ENCODE measurements at regions of chr10 and their contacts with region 1.

Region 1: GRCh38 chr10:112471878-112472487 is 25.0 kb downstream of the VTI1A start:
- DNase-seq: peak; percentile 66
- H3K4me3 ChIP-seq: no peak overlapping the region
- H3K27ac ChIP-seq: no peak overlapping the region
- H3K4me1 ChIP-seq: no peaks in the 10 kb centered on the region
- H3K27me3 ChIP-seq: no peaks in the 10 kb centered on the region
- CTCF ChIP-seq: peak; percentile 44 to 45
- POLR2A ChIP-seq: no peak

Region 2: DNA sequence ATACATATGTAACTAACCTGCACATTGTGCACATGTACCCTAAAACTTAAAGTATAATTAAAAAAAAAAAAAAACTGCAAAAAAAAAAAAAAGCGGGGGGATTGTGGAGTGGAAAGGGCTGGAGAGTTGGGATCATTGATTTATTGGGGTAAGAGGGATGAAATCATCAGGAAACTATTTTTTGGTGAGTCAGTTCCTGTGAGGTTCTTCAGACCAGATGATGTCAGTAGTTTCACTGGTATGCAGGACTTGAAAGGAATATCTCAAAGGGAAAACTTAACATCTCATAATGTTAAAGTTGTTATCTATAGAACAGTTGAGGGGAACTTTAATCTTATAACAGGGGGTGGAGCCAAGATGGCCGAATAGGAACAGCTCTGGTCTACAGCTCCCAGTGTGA is 221.4 kb before region 1 on chr10:
- CTCF ChIA-PET with region 1: no interaction called
- POLR2A ChIA-PET with region 1: no interaction called
- dilution Hi-C with region 1: no loop called
- intact Hi-C with region 1: no loop called
- DNase-seq: no peak
- H3K4me3 ChIP-seq: no peak overlapping the region
- H3K27ac ChIP-seq: no peak overlapping the region
- H3K4me1 ChIP-seq: no peaks in the 10 kb centered on the region
- H3K27me3 ChIP-seq: no peaks in the 10 kb centered on the region
- CTCF ChIP-seq: no peak
- POLR2A ChIP-seq: no peak

Region 3: DNA sequence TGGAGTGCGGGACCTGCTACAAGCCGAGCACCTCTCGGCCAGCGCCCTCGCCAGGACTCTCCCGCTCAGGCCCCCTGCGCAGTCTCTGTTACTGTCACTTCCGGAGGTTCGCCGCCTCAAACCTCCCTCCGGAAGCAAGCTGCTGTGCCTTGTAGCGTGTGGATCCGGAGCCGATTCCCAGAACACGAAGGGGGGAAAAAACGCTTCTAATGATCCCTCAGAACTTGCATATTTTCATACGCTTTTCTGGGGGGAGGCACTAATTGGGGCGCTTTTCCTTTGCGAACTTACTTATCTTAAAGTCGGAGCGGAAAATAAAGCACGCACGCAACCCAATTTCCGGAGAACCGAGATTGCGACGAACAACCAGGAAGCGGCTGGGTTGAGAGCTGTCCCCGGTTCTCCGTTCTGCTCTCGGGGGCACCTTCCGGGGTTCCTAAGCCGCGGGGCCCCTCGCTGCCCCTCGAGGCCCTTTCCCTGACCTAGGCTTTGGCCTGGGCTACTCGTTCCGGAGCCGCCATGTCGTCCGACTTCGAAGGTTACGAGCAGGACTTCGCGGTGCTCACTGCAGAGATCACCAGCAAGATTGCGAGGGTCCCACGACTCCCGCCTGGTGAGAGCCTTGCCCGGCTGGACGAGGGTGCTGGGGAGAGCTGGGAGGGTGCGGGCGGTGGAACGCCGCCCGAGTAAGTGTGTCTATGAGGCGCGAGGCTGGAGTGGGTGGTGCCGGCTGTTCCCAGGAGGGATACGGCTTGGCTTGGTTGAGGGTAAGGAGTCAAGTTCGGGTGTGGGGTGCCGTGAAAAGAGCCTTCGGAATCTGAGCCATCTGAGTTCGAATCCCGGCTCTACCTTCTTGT is 24.9 kb before region 1 on chr10 and contains the starts of genes VTI1A and ZDHHC6:
- CTCF ChIA-PET with region 1: interaction called, 19 read pairs
- POLR2A ChIA-PET with region 1: no interaction called
- dilution Hi-C with region 1: no loop called
- intact Hi-C with region 1: no loop called
- DNase-seq: peak; percentile 79
- H3K4me3 ChIP-seq: peak within 1 kb of the TSS; percentile 89 to 98 (median 96)
- H3K27ac ChIP-seq: peak within 1 kb of the TSS; percentile 94
- H3K4me1 ChIP-seq: peaks cover 18% of the 10 kb centered on the region
- H3K27me3 ChIP-seq: no peaks in the 10 kb centered on the region
- CTCF ChIP-seq: peak in 1 of 2 donors; percentile 36
- POLR2A ChIP-seq: peak; percentile 91
- total RNA-seq, gene VTI1A: 35.6 and 36.8 TPM in 2 replicates
- total RNA-seq, gene ZDHHC6: 41.9 and 42.1 TPM in 2 replicates

Region 4: DNA sequence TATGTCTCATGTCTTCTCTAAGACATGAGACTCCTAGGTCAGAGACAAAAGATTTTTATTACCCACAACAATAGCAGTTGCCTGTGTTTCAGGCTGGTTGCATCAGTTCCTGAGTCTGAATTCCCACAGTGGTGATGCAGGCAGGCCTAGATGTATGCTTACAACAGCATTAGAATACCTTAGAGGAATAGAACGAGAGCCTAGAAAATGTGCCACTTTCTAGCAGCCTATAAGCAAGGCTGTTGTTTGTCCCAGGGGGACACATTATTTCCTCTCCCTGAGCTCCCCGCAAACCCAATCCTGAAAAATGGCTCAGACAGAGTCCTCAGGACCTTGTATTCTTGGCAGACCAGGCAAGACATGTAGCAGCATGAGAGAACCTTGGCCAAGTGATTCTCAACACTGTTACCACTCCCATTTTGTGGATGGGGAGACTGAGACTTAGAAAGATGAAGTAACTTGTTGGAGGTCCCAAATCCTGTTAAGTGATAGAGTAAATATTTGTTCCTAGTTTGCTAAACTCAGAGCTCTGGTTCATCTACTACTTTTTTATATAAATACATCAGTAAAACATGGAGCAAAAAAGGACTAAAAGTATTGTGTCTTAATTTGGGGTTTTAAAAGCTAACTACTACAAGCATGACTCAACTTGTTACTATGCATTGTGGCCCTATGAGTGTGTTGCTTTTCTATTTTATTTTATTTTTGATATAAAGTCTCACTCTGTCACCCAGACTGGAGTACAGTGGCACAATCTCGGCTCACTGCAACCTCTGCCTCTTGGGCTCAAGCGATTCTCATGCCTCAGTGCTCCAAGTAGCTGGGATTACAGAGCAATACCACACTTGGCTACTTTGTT is 10.7 kb before region 1 on chr10:
- CTCF ChIA-PET with region 1: interaction called, 22 read pairs
- POLR2A ChIA-PET with region 1: no interaction called
- dilution Hi-C with region 1: no loop called
- intact Hi-C with region 1: no loop called
- DNase-seq: peak; percentile 13
- H3K4me3 ChIP-seq: no peak overlapping the region
- H3K27ac ChIP-seq: peak overlapping the region; percentile 58
- H3K4me1 ChIP-seq: no peaks in the 10 kb centered on the region
- H3K27me3 ChIP-seq: no peaks in the 10 kb centered on the region
- CTCF ChIP-seq: no peak
- POLR2A ChIP-seq: no peak

Region 5: GRCh38 chr10:112490545-112490944 is 18.6 kb after region 1 on chr10:
- CTCF ChIA-PET with region 1: interaction called, 24 read pairs
- POLR2A ChIA-PET with region 1: no interaction called
- dilution Hi-C with region 1: no loop called
- intact Hi-C with region 1: no loop called
- DNase-seq: peak; percentile 39
- H3K4me3 ChIP-seq: no peak overlapping the region
- H3K27ac ChIP-seq: no peak overlapping the region
- H3K4me1 ChIP-seq: peaks cover 2% of the 10 kb centered on the region
- H3K27me3 ChIP-seq: no peaks in the 10 kb centered on the region
- CTCF ChIP-seq: no peak
- POLR2A ChIP-seq: no peak

Region 6: DNA sequence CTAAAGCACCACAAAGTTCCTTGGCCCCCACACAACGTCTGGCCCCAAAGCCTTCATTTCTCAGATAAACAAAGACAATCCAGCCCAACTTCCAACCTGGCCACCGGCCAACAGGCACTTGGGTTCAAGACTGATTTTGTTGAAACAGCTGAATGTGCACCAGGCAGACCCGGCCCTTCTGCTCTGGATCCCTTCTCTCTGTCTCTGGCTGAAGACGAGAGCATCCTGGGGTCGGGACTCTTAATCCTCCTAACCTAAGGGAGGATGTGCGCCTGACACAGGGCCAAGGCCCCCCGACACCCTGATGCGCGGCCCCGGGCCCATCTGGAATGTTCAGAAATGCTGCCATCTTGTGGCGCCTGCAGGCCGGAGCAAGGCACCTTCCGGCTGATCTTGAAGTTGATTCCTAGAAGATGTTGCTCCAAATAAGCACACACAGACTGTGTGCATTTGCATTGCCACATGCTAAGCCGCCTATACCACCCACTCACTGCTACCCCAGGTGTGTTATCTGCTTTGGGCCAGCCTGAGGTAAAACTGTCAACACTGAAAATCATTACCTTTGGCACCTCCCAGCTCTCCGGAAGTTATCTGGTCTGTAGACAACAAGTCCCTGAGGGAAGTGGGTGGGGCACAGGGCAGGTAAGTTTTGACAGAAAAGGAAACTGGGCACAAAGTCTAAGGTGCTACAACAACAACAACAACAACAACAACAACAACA is 982.5 kb after region 1 on chr10:
- CTCF ChIA-PET with region 1: interaction called, 7 read pairs
- POLR2A ChIA-PET with region 1: no interaction called
- dilution Hi-C with region 1: no loop called
- intact Hi-C with region 1: loop called (anchors 1 kb)
- DNase-seq: peak; percentile 36
- H3K4me3 ChIP-seq: no peak overlapping the region
- H3K27ac ChIP-seq: no peak overlapping the region
- H3K4me1 ChIP-seq: no peaks in the 10 kb centered on the region
- H3K27me3 ChIP-seq: peaks cover 2 to 3% of the 10 kb centered on the region in 2 experiments
- CTCF ChIP-seq: peak; percentile 65 to 76
- POLR2A ChIP-seq: no peak

Region 7: GRCh38 chr10:113521123-113521795 is 1049.3 kb after region 1 on chr10:
- CTCF ChIA-PET with region 1: interaction called, 11 read pairs
- POLR2A ChIA-PET with region 1: no interaction called
- dilution Hi-C with region 1: no loop called
- intact Hi-C with region 1: loop called (anchors 1 kb)
- DNase-seq: peak; percentile 73
- H3K4me3 ChIP-seq: no peak overlapping the region
- H3K27ac ChIP-seq: no peak overlapping the region
- H3K4me1 ChIP-seq: no peaks in the 10 kb centered on the region
- H3K27me3 ChIP-seq: peaks cover 0 to 1% of the 10 kb centered on the region in 2 experiments
- CTCF ChIP-seq: peak; percentile 92 to 95
- POLR2A ChIP-seq: no peak

Measured in endothelial cell of umbilical vein (primary cell).